Calu3 (cell line): ENCODE measurements at regions of chr22 and their contacts with region 1.

Region 1: DNA sequence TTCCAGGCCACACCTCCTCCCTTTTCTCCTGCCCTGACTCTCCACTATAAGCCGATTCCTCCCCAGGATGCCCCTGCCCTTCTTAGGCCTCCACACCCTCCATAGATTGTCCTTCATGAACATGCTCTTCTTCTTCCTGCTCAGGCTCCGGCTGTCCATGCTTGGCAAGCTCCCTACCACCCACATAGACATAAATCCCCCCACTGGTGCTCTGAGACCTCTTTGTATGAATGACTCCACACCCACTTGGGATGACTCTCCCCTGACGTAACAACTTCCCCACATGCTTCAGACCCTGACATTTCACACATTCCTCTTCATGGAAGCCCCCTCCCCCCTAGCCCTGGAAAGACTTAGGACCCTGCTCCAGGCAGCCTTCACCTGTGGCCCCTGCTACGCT is 542.5 kb upstream of the LARGE1 start:
- DNase-seq: no peak
- H3K4me3 Mint-ChIP-seq: no peak overlapping the region
- H3K27ac Mint-ChIP-seq: no peak overlapping the region
- H3K4me1 Mint-ChIP-seq: no peaks in the 10 kb centered on the region
- H3K27me3 Mint-ChIP-seq: no peaks in the 10 kb centered on the region
- CTCF ChIP-seq: no peak

Region 2: DNA sequence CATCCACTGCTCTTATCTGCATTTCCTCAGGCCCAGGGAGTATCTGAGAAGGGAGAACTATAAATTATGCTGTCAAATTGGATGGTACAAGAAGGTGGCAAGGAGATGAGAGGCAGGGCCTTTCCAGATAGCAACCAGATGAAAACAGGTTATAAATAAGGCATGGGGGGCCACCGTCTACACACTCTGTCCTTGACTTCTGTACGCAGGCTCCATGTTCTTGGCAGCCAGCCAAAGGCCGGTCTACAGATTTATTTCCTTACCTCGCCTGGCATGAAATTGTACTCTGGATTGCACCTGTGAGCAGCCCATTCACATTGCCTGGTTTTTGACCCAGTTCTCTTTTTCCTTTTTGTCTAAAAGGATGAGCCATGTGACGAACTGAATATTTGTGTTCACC is 385.4 kb before region 1 on chr22:
- CTCF ChIA-PET with region 1: interaction called, 10 read pairs
- intact Hi-C with region 1: no loop called
- DNase-seq: no peak
- H3K4me3 Mint-ChIP-seq: no peak overlapping the region
- H3K27ac Mint-ChIP-seq: no peak overlapping the region
- H3K4me1 Mint-ChIP-seq: no peaks in the 10 kb centered on the region
- H3K27me3 Mint-ChIP-seq: no peaks in the 10 kb centered on the region
- CTCF ChIP-seq: no peak

Region 3: DNA sequence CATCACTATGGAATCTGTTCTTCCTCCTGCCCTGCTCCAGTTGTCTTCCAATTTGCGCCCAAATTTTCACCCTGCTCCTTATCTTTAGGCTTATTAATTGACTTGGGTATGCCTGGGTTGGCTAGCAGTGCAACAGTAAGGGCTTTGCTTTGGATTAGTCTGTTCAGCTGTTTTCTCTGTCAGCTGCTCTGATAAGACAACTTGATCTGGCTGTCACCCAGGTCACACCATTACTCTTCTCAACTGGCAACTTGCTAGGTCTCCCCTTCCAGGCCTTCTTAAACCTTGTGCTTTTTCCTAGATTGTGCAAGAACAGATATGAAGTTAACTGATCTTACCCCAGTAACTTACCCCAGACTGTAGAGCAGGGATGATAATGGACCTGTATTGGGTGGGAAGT is 184.7 kb before region 1 on chr22:
- CTCF ChIA-PET with region 1: no interaction called
- intact Hi-C with region 1: no loop called
- DNase-seq: no peak
- H3K4me3 Mint-ChIP-seq: no peak overlapping the region
- H3K27ac Mint-ChIP-seq: no peak overlapping the region
- H3K4me1 Mint-ChIP-seq: no peaks in the 10 kb centered on the region
- H3K27me3 Mint-ChIP-seq: no peaks in the 10 kb centered on the region
- CTCF ChIP-seq: no peak